ENCODE measurements at regions of chr19 and their contacts with region 1.

Region 1: DNA sequence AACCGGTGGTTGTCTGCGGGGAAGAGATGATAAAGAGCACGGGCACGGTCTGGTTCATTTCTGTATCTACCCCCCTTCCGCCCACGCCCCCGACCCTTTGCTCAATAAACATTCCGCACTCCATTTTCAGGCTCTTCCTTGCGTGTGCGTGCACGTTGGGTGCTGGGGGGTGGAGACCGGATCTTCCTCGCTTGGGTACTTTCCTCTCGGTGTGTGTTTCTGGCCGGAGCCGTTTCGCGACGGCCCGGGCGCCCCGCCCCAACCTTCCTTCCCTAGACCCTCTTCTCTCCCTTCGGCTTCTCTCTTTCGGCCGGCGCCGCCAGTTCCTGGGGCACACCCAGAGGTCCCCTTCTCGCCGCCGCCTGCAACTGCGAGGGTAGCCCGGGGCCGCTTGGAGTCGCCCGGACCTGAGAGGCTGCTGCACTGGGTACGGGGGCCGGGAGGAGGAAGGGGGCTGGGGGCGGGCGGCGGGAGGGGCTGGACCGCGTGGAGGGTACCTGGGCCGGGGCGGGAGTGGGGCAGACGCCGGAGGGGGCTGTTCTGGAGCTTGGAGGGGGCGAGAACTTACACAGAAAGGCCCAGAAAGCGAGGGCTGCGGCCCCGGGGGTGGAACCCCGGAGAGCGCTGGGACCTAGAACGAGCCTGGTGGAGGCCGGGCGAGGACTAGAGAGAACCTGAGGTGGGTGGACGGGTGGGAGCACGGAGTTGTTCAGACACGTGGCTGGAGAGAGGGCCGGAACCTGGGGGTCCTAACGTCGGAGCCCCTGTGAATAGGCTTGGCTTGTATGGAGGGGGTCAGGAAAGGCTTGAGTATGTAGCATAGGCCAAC is at the start of gene ZNF581:
- DNase-seq: peak; percentile 78
- H3K4me3 ChIP-seq: peak within 1 kb of the TSS; percentile 81 to 86 (median 86)
- H3K27ac ChIP-seq: peak within 1 kb of the TSS; percentile 33
- H3K4me1 ChIP-seq: peaks cover 48% of the 10 kb centered on the region
- H3K27me3 ChIP-seq: no peaks in the 10 kb centered on the region
- CTCF ChIP-seq: no peak
- total RNA-seq, gene ZNF581: 19.8 to 30.4 TPM

Region 2: GRCh38 chr19:55160128-55160985 is 483.2 kb before region 1 on chr19:
- CTCF ChIA-PET with region 1: no interaction called
- dilution Hi-C with region 1: loop called (anchors 10 kb)
- in situ Hi-C with region 1: no loop called
- intact Hi-C with region 1: no loop called
- DNase-seq: peak; percentile 83
- H3K4me3 ChIP-seq: no peak overlapping the region
- H3K27ac ChIP-seq: no peak overlapping the region
- H3K4me1 ChIP-seq: peaks cover 18% of the 10 kb centered on the region
- H3K27me3 ChIP-seq: peaks cover 2% of the 10 kb centered on the region
- CTCF ChIP-seq: peak; percentile 86 to 97

Region 3: GRCh38 chr19:55599468-55600279 is 43.9 kb before region 1 on chr19 and contains the start of gene FIZ1:
- CTCF ChIA-PET with region 1: no interaction called
- dilution Hi-C with region 1: loop called (anchors 5 kb)
- in situ Hi-C with region 1: no loop called
- intact Hi-C with region 1: no loop called
- DNase-seq: peak; percentile 98
- H3K4me3 ChIP-seq: peak within 1 kb of the TSS; percentile 60 to 92 (median 80)
- H3K27ac ChIP-seq: peak within 1 kb of the TSS; percentile 89
- H3K4me1 ChIP-seq: peaks cover 10% of the 10 kb centered on the region
- H3K27me3 ChIP-seq: no peaks in the 10 kb centered on the region
- CTCF ChIP-seq: no peak
- total RNA-seq, gene FIZ1: 5.3 to 13.4 TPM

Region 4: DNA sequence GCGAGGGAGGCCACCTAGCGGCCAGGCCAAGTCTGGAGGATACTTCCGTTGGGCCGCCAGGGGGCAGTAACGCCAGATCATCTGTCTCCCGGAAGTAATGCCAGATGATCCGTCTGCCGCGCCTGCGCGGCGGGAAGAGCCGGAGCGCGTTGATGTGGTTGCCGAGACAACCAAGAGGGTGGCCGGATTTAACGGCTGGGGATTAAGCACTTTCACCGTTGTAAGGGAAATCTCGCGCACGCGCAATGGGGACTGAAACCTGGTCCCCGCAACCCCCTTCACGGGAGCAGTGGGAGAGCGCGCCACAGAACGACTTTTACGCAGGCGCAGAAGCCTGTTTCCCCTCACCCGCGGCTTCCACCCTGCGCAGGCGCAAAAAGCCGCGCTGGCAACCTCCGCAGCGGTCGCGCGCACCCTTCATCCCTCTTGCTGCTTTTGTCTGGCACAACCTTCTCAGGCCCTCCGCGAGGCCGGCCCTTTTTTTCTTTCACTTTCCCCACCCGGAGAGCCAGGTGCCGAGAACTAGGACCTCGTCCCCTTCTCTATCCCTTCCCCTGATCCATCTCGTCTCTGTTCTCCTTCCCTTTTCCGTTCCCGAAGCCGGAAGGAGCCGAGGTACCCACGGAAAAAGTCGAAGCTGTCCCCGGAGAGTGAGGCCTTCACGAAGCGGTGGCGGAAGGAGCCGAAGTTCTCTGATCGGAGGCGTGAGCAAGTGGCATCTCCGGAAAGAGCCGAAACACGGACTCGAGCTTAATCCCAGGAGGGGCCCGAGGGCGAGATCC is 10.4 kb after region 1 on chr19:
- CTCF ChIA-PET with region 1: interaction called, 3 read pairs
- dilution Hi-C with region 1: no loop called
- in situ Hi-C with region 1: no loop called
- intact Hi-C with region 1: loop called (anchors 1 kb)
- DNase-seq: peak; percentile 98
- H3K4me3 ChIP-seq: peak overlapping the region; percentile 46 to 67 (median 60)
- H3K27ac ChIP-seq: peak overlapping the region; percentile 90
- H3K4me1 ChIP-seq: peaks cover 17% of the 10 kb centered on the region
- H3K27me3 ChIP-seq: no peaks in the 10 kb centered on the region
- CTCF ChIP-seq: peak; percentile 99 to 100

Region 5: GRCh38 chr19:55674841-55675660 is 31.5 kb after region 1 on chr19 and contains the start of gene EPN1:
- CTCF ChIA-PET with region 1: no interaction called
- dilution Hi-C with region 1: no loop called
- in situ Hi-C with region 1: no loop called
- intact Hi-C with region 1: loop called (anchors 1 kb)
- DNase-seq: peak; percentile 95
- H3K4me3 ChIP-seq: peak within 1 kb of the TSS; percentile 77 to 87 (median 78)
- H3K27ac ChIP-seq: peak within 1 kb of the TSS; percentile 69
- H3K4me1 ChIP-seq: peaks cover 31% of the 10 kb centered on the region
- H3K27me3 ChIP-seq: no peaks in the 10 kb centered on the region
- CTCF ChIP-seq: no peak
- total RNA-seq, gene EPN1: 47.0 to 135 TPM

Region 6: DNA sequence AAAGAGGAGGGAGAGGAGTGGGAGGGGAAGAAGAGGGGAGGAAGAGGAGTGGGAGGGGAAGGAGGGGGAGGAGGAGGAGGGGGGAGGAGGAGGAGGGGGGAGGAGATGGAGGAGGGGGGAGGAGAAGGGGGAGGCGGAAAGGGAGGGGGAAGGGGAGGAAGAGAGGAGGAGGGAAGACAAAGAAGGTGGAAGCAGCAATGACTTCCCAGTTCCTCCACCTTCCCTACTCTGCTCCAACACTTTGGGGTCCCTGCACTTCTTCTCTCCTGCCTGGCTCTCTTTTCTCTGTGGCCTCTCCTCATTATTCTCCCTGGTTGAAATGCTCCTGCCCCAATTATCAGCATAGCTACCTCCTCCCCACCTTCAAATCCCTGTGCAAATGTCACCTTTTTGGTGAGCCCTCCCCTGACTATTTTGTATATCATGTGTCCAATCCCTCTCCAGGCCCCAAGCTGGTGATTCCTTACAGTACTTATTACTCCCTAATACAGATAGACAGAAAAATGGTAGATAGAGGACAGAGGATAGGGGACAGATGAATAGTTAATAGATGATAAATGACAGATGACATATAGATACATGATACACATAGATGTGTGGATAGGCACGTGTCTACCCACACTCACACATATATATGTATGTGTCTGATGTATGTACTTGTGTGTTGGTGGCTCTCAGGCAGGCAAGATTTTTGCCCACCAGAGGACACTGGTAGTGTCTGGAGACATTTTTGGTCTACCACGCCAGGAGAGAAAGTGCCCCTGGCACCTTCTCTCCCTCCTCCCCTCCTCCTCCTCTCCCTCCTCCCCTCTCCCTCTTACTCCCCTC is 69.5 kb after region 1 on chr19:
- CTCF ChIA-PET with region 1: no interaction called
- dilution Hi-C with region 1: no loop called
- in situ Hi-C with region 1: no loop called
- intact Hi-C with region 1: no loop called
- DNase-seq: no peak
- H3K4me3 ChIP-seq: no peak overlapping the region
- H3K27ac ChIP-seq: no peak overlapping the region
- H3K4me1 ChIP-seq: no peaks in the 10 kb centered on the region
- H3K27me3 ChIP-seq: no peaks in the 10 kb centered on the region
- CTCF ChIP-seq: no peak

Region 7: GRCh38 chr19:55902080-55902751 is 258.7 kb after region 1 on chr19:
- CTCF ChIA-PET with region 1: no interaction called
- dilution Hi-C with region 1: no loop called
- in situ Hi-C with region 1: no loop called
- intact Hi-C with region 1: no loop called
- DNase-seq: no peak
- H3K4me3 ChIP-seq: no peak overlapping the region
- H3K27ac ChIP-seq: no peak overlapping the region
- H3K4me1 ChIP-seq: no peaks in the 10 kb centered on the region
- H3K27me3 ChIP-seq: no peaks in the 10 kb centered on the region
- CTCF ChIP-seq: no peak

Region 8: GRCh38 chr19:56314562-56315077 is 671.1 kb after region 1 on chr19 and contains the start of gene ZSCAN5A:
- CTCF ChIA-PET with region 1: interaction called, 23 read pairs
- dilution Hi-C with region 1: no loop called
- in situ Hi-C with region 1: no loop called
- intact Hi-C with region 1: loop called (anchors 10 kb)
- DNase-seq: peak; percentile 95
- H3K4me3 ChIP-seq: peak within 1 kb of the TSS; percentile 66 to 91 (median 80)
- H3K27ac ChIP-seq: peak within 1 kb of the TSS; percentile 95
- H3K4me1 ChIP-seq: peaks cover 6% of the 10 kb centered on the region
- H3K27me3 ChIP-seq: no peaks in the 10 kb centered on the region
- CTCF ChIP-seq: no peak
- total RNA-seq, gene ZSCAN5A: 5.5 to 7.4 TPM

Measured in mammary epithelial cell (primary cell).